Transverse colon (tissue), 4 donors: ENCODE measurements at regions of chr4 and their contacts with region 1.

Region 1: DNA sequence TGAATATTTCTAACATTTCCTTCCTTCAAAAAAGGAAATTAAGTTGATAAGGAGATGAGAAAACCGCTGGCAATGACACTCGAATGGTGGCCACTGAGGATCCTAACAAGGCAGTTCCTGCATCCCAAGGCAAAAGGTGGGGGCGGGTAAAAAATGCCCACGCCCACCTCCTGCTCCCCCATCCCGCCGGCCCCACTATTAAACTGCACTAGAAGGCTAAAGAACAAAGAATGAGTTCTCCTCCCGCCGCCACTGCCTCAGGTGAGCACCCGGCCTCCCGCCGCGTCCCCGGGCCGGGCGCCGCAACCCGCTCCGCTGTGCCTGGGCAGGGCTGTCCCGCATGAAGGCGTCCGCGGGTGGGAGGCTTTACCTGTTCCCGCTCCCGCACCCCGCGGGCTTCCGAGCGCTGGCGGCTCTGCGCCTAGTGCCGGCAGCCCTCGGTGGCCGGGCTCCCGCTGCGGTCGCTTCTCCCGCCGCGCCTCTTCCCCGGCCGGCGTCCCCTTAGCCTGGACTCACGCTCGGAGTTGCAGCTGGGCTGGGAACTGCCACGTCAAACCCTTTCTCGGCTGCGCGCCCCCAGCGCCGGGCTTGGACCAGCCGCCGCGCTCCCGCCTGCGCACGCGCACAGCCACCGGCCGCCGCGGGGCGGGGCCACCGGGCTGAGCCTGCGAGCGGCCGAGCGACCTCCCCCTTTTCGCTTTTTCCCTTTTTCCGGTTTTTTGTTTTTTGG is at the start of gene SEC24D:
- DNase-seq: peak; percentile 90
- H3K4me3 ChIP-seq: peak within 1 kb of the TSS; percentile 83 to 97 (median 87)
- H3K27ac ChIP-seq: peak within 1 kb of the TSS; percentile 96 to 99 (median 98)
- H3K4me1 ChIP-seq: peaks cover 7 to 25% (median 11%) of the 10 kb centered on the region in 4 donors
- H3K27me3 ChIP-seq: no peaks in the 10 kb centered on the region
- CTCF ChIP-seq: peak in 1 of 5 experiments; percentile 5
- EP300 ChIP-seq: no peak
- POLR2A ChIP-seq: peak; percentile 75
- total RNA-seq, gene SEC24D: 9.7 to 37.9 (median 17.0) TPM

Region 2: DNA sequence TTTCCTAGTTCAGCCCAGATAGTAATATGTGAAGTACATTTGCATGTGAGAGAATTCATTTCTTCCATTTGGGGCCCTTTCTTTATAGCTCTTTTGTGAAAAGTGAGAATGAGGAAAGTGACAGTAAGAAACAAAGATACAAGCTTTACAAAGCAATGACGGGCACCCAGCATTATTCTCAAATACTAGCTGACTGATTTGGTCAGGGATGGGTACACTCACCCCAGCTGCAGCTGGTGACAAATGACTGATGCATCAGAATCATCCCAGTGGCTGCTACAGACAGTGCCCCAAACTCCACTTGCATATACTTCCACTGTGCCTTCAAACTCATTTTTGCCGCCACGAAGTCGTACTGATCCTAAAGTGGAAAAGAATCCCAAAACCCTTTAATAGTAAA is 497.8 kb before region 1 on chr4:
- in situ Hi-C with region 1: no loop called
- intact Hi-C with region 1: no loop called
- DNase-seq: no peak
- H3K4me3 ChIP-seq: no peak overlapping the region
- H3K27ac ChIP-seq: no peak overlapping the region
- H3K4me1 ChIP-seq: no peaks in the 10 kb centered on the region
- H3K27me3 ChIP-seq: no peaks in the 10 kb centered on the region
- CTCF ChIP-seq: no peak
- EP300 ChIP-seq: no peak
- POLR2A ChIP-seq: no peak

Region 3: DNA sequence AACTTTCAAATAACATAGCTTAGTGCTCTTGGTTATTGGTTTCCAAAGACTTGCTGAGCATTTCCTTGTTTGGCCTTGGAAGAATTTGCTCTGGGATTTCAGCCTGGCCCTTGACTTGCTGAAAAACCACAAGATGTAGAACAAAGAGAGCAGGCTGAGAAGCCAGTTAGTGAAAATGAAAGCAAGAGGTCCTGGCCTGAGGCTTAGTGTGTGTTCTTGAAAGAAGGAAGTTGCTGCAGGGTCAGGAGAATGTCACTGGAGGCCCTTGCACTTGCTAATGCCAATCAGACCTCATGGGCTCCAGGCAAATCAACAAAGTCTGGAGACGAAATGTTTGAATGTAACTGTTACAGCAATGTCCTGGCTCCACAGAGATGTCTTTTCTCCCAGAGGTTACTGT is 132.3 kb after region 1 on chr4:
- in situ Hi-C with region 1: no loop called
- intact Hi-C with region 1: loop called (anchors 5 kb)
- DNase-seq: peak; percentile 43
- H3K4me3 ChIP-seq: no peak overlapping the region
- H3K27ac ChIP-seq: peak overlapping the region; percentile 82 to 88 (median 86)
- H3K4me1 ChIP-seq: peaks cover 17 to 63% (median 24%) of the 10 kb centered on the region in 4 donors
- H3K27me3 ChIP-seq: no peaks in the 10 kb centered on the region
- CTCF ChIP-seq: no peak
- EP300 ChIP-seq: no peak
- POLR2A ChIP-seq: no peak